Activated CD4-positive, alpha-beta memory T cell treated with anti-CD3 and anti-CD28 coated beads for 36 hours (primary cell): ENCODE measurements at regions of chr2 and their contacts with region 1.

Region 1: GRCh38 chr2:174593574-174594203 is 3.9 kb downstream of the WIPF1 start:
- DNase-seq: peak; percentile 79
- H3K4me3 Mint-ChIP-seq: peak overlapping the region; percentile 81
- H3K27ac Mint-ChIP-seq: peak overlapping the region; percentile 98
- H3K4me1 Mint-ChIP-seq: peaks cover 71% of the 10 kb centered on the region
- H3K27me3 Mint-ChIP-seq: no peaks in the 10 kb centered on the region

Region 2: DNA sequence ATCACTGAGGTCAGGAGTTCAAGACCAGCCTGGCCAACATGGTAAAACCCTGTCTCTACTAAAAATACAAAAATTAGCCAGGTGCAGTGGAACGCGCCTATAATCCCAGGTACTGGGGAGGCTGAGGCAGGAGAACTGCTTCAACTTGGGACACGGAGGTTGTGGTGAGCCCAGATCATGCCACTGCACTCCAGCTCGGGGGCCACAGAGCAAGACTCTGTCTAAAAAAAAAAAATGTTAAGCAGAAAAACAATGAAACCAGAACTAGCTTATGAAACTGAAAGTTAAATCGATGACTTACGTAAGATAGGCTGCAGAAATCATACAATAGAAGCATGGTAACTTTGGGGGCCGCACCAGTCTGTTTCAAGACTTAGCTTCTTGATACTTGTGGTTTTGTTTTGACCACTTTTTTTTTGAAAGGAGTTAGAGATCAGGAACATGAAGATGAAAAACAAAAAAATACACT is 100.7 kb before region 1 on chr2:
- CTCF ChIA-PET with region 1: interaction called, 3 read pairs
- POLR2A ChIA-PET with region 1: interaction called, 6 read pairs
- intact Hi-C with region 1: loop called (anchors 2 kb)
- DNase-seq: peak; percentile 73
- H3K4me3 Mint-ChIP-seq: peak overlapping the region; percentile 70
- H3K27ac Mint-ChIP-seq: peak overlapping the region; percentile 93
- H3K4me1 Mint-ChIP-seq: peaks cover 72% of the 10 kb centered on the region
- H3K27me3 Mint-ChIP-seq: no peaks in the 10 kb centered on the region

Region 3: DNA sequence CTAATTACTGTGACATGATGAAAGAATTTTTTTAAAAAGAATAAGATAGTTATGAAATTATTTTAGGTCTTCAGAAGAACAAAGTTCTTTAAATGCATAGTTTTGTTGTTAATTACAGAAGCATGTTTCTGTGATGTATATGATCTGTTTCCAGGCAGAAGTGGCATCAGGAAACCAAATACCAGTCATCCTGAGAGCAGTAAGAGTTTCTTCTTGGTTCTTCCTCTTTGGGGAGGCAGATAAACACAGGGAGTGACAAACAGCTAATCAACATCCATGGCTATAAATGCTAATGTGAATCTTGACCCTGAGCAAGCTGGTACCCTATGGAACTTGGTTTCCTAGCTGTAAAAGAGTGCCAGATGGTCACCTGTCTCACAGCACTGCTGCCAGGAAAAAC is 25.3 kb before region 1 on chr2:
- CTCF ChIA-PET with region 1: interaction called, 6 read pairs
- POLR2A ChIA-PET with region 1: interaction called, 4 read pairs
- intact Hi-C with region 1: loop called (anchors 1 kb)
- DNase-seq: no peak
- H3K4me3 Mint-ChIP-seq: no peak overlapping the region
- H3K27ac Mint-ChIP-seq: peak overlapping the region; percentile 76
- H3K4me1 Mint-ChIP-seq: peaks cover 65% of the 10 kb centered on the region
- H3K27me3 Mint-ChIP-seq: no peaks in the 10 kb centered on the region

Region 4: GRCh38 chr2:174577967-174578589 is 15.6 kb before region 1 on chr2:
- CTCF ChIA-PET with region 1: interaction called, 55 read pairs
- POLR2A ChIA-PET with region 1: interaction called, 53 read pairs
- intact Hi-C with region 1: loop called (anchors 1 kb)
- DNase-seq: peak; percentile 70
- H3K4me3 Mint-ChIP-seq: no peak overlapping the region
- H3K27ac Mint-ChIP-seq: peak overlapping the region; percentile 54
- H3K4me1 Mint-ChIP-seq: peaks cover 78% of the 10 kb centered on the region
- H3K27me3 Mint-ChIP-seq: no peaks in the 10 kb centered on the region

Region 5: GRCh38 chr2:174615871-174616436 is 22.3 kb after region 1 on chr2:
- CTCF ChIA-PET with region 1: interaction called, 19 read pairs
- POLR2A ChIA-PET with region 1: interaction called, 110 read pairs
- intact Hi-C with region 1: loop called (anchors 2 kb)
- DNase-seq: no peak
- H3K4me3 Mint-ChIP-seq: peak overlapping the region; percentile 5
- H3K27ac Mint-ChIP-seq: peak overlapping the region; percentile 85
- H3K4me1 Mint-ChIP-seq: peaks cover 84% of the 10 kb centered on the region
- H3K27me3 Mint-ChIP-seq: no peaks in the 10 kb centered on the region

Region 6: GRCh38 chr2:174688079-174688478 is 94.4 kb after region 1 on chr2:
- CTCF ChIA-PET with region 1: interaction called, 96 read pairs
- POLR2A ChIA-PET with region 1: interaction called, 8 read pairs
- intact Hi-C with region 1: no loop called
- DNase-seq: no peak
- H3K4me3 Mint-ChIP-seq: no peak overlapping the region
- H3K27ac Mint-ChIP-seq: no peak overlapping the region
- H3K4me1 Mint-ChIP-seq: peaks cover 32% of the 10 kb centered on the region
- H3K27me3 Mint-ChIP-seq: no peaks in the 10 kb centered on the region